Activated naive CD4-positive, alpha-beta T cell treated with anti-CD3 and anti-CD28 coated beads for 36 hours (primary cell): ENCODE measurements at regions of chrX and their contacts with region 1.

Region 1: GRCh38 chrX:118807151-118808017 is 16.2 kb upstream of the ZCCHC12 start:
- DNase-seq: peak; percentile 56
- H3K4me3 Mint-ChIP-seq: no peak overlapping the region
- H3K27ac Mint-ChIP-seq: no peak overlapping the region
- H3K4me1 Mint-ChIP-seq: no peaks in the 10 kb centered on the region
- H3K27me3 Mint-ChIP-seq: peaks cover 6% of the 10 kb centered on the region

Region 2: GRCh38 chrX:118459494-118459893 is 347.9 kb before region 1 on chrX:
- CTCF ChIA-PET with region 1: interaction called, 6 read pairs
- intact Hi-C with region 1: loop called (anchors 1 kb)
- DNase-seq: peak; percentile 37
- H3K4me3 Mint-ChIP-seq: no peak overlapping the region
- H3K27ac Mint-ChIP-seq: no peak overlapping the region
- H3K4me1 Mint-ChIP-seq: no peaks in the 10 kb centered on the region
- H3K27me3 Mint-ChIP-seq: no peaks in the 10 kb centered on the region

Region 3: GRCh38 chrX:118627084-118627758 is 180.2 kb before region 1 on chrX:
- CTCF ChIA-PET with region 1: interaction called, 6 read pairs
- intact Hi-C with region 1: loop called (anchors 1 kb)
- DNase-seq: no peak
- H3K4me3 Mint-ChIP-seq: no peak overlapping the region
- H3K27ac Mint-ChIP-seq: no peak overlapping the region
- H3K4me1 Mint-ChIP-seq: no peaks in the 10 kb centered on the region
- H3K27me3 Mint-ChIP-seq: no peaks in the 10 kb centered on the region

Region 4: DNA sequence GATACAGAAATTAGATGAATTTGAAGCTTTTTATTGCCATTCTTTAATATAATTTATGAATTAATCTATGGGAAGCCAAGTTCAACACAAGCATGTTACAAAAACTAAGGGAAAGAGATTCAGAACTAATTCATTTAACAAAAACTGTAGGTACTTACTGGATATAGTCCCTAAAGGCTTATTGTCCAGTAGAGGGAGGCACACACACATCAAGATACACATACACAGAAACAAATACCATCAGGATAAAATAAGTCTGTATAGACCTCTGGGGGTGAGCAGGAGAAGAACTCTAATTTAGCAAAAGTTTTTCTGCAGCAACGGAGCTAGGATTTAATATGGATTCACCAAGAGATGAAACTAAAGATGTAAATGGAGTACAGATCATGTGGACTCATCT is 163.0 kb before region 1 on chrX:
- CTCF ChIA-PET with region 1: no interaction called
- intact Hi-C with region 1: loop called (anchors 1 kb)
- DNase-seq: no peak
- H3K4me3 Mint-ChIP-seq: no peak overlapping the region
- H3K27ac Mint-ChIP-seq: no peak overlapping the region
- H3K4me1 Mint-ChIP-seq: no peaks in the 10 kb centered on the region
- H3K27me3 Mint-ChIP-seq: no peaks in the 10 kb centered on the region

Region 5: GRCh38 chrX:118761939-118762707 is 45.3 kb before region 1 on chrX:
- CTCF ChIA-PET with region 1: interaction called, 7 read pairs
- intact Hi-C with region 1: loop called (anchors 1 kb)
- DNase-seq: peak; percentile 7
- H3K4me3 Mint-ChIP-seq: no peak overlapping the region
- H3K27ac Mint-ChIP-seq: no peak overlapping the region
- H3K4me1 Mint-ChIP-seq: no peaks in the 10 kb centered on the region
- H3K27me3 Mint-ChIP-seq: no peaks in the 10 kb centered on the region

Region 6: DNA sequence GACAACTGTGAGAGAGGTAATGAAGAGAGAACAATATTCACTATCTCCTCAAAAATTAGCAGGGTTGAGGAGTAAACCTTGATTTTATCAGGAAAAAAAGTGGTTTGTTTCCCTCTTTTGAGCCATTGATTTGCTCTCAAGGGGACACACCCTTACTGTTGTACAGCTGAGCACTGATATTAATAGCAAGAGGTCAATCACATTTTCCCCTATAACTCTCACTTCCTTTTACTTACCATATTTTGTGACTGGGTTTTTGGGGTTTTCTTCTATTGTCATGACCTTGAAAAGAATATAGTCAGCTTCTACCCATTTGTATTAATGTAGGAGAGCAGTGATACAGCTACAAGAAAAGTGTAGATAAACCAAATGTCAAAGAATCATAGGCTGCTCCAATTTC is 96.8 kb after region 1 on chrX:
- CTCF ChIA-PET with region 1: no interaction called
- intact Hi-C with region 1: no loop called
- DNase-seq: no peak
- H3K4me3 Mint-ChIP-seq: no peak overlapping the region
- H3K27ac Mint-ChIP-seq: no peak overlapping the region
- H3K4me1 Mint-ChIP-seq: no peaks in the 10 kb centered on the region
- H3K27me3 Mint-ChIP-seq: no peaks in the 10 kb centered on the region